H1 (cell line): ENCODE measurements at regions of chr14 and their contacts with region 1.

Region 1: GRCh38 chr14:38605193-38606114 is 349.6 kb upstream of the CLEC14A start:
- DNase-seq: no peak
- H3K4me3 ChIP-seq: no peak overlapping the region
- H3K27ac ChIP-seq: no peak overlapping the region
- H3K4me1 ChIP-seq: no peaks in the 10 kb centered on the region
- H3K27me3 ChIP-seq: no peaks in the 10 kb centered on the region; a peak in 2 of 7 replicates
- CTCF ChIP-seq: peak in 2 of 3 experiments; percentile 25 to 33; a peak in 2 of 4 replicates
- EP300 ChIP-seq: no peak
- POLR2A ChIP-seq: no peak
- RAD21 ChIP-seq: peak; percentile 56 to 57

Region 2: GRCh38 chr14:38578278-38578681 is 27.2 kb before region 1 on chr14:
- CTCF ChIA-PET with region 1: no interaction called
- POLR2A ChIA-PET with region 1: no interaction called
- DNase-seq: no peak
- H3K4me3 ChIP-seq: no peak overlapping the region
- H3K27ac ChIP-seq: no peak overlapping the region
- H3K4me1 ChIP-seq: peaks cover 0 to 6% (median 0%) of the 10 kb centered on the region in 4 experiments; a peak in 2 of 7 replicates
- H3K27me3 ChIP-seq: no peaks in the 10 kb centered on the region
- CTCF ChIP-seq: no peak
- EP300 ChIP-seq: no peak
- POLR2A ChIP-seq: no peak
- RAD21 ChIP-seq: no peak

Region 3: DNA sequence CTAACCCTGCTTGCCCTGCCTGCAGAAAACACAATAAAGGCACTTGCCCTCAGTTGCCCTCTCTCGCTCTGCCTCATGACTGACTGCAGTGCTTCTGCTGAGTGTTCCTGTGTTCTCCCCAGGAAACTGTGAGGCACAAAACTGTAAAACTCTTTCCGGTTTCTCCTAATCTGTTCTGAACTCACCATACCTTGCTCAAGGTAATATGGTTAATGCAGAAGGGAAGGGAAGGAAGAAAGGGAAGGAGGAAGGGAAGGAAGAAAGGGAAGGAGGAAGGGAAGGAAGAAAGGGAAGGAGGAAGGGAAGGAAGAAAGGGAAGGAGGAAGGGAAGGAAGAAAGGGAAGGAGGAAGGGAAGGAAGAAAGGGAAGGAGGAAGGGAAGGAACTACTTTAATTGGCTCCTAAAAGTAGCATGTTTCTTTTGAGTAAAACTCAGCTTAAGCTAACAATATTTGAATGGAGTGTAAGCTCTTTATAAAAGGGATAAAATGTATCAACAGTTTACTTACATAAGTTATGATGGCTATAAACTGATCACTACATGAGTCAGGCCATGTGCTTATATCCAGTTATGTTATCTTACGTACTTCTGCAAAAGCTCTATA is 15.6 kb before region 1 on chr14:
- CTCF ChIA-PET with region 1: interaction called, 11 read pairs
- POLR2A ChIA-PET with region 1: no interaction called
- DNase-seq: no peak
- H3K4me3 ChIP-seq: no peak overlapping the region
- H3K27ac ChIP-seq: no peak overlapping the region
- H3K4me1 ChIP-seq: no peaks in the 10 kb centered on the region
- H3K27me3 ChIP-seq: no peaks in the 10 kb centered on the region
- CTCF ChIP-seq: no peak
- EP300 ChIP-seq: no peak
- POLR2A ChIP-seq: no peak
- RAD21 ChIP-seq: no peak

Region 4: DNA sequence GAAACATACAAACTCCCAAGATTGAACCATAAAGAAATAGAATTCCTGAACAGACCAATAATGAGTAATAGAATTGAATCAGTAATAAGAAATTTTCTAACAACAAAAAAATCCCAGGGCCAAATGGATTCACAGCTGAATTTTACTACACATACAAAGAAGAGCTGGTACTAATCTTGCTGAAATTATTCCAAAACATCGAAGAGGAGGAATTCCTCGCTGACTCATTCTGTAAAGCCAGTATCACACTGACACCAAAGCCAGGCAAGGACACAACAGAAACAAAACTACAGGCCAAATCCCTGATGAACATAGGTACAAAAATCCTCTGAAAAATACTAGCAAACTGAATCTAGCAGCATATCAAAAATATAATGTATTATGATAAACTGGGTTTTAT is 18.2 kb after region 1 on chr14:
- CTCF ChIA-PET with region 1: interaction called, 15 read pairs
- POLR2A ChIA-PET with region 1: no interaction called
- DNase-seq: no peak
- H3K4me3 ChIP-seq: no peak overlapping the region
- H3K27ac ChIP-seq: no peak overlapping the region
- H3K4me1 ChIP-seq: no peaks in the 10 kb centered on the region
- H3K27me3 ChIP-seq: no peaks in the 10 kb centered on the region
- CTCF ChIP-seq: no peak
- EP300 ChIP-seq: no peak
- POLR2A ChIP-seq: no peak
- RAD21 ChIP-seq: no peak

Region 5: GRCh38 chr14:38745861-38746260 is 140.4 kb after region 1 on chr14:
- CTCF ChIA-PET with region 1: no interaction called
- POLR2A ChIA-PET with region 1: no interaction called
- DNase-seq: no peak
- H3K4me3 ChIP-seq: no peak overlapping the region
- H3K27ac ChIP-seq: no peak overlapping the region
- H3K4me1 ChIP-seq: no peaks in the 10 kb centered on the region
- H3K27me3 ChIP-seq: no peaks in the 10 kb centered on the region
- CTCF ChIP-seq: no peak
- EP300 ChIP-seq: no peak
- POLR2A ChIP-seq: no peak
- RAD21 ChIP-seq: no peak